ENCODE measurements at regions of chr12 and their contacts with region 1.

Region 1: GRCh38 chr12:52171950-52172512 is 19.8 kb downstream of the KRT80 start:
- DNase-seq: peak; percentile 39
- ATAC-seq: peak; percentile 70
- H3K4me3 ChIP-seq: no peak overlapping the region
- H3K27ac ChIP-seq: no peak overlapping the region
- H3K4me1 ChIP-seq: peaks cover 18% of the 10 kb centered on the region
- H3K27me3 ChIP-seq: peaks cover 0 to 2% of the 10 kb centered on the region in 2 experiments; a peak in 2 of 5 replicates
- CTCF ChIP-seq: peak; percentile 64
- EP300 ChIP-seq: no peak
- POLR2A ChIP-seq: no peak
- RAD21 ChIP-seq: peak; percentile 35; the same call in 1 of the 2 replicates

Region 2: DNA sequence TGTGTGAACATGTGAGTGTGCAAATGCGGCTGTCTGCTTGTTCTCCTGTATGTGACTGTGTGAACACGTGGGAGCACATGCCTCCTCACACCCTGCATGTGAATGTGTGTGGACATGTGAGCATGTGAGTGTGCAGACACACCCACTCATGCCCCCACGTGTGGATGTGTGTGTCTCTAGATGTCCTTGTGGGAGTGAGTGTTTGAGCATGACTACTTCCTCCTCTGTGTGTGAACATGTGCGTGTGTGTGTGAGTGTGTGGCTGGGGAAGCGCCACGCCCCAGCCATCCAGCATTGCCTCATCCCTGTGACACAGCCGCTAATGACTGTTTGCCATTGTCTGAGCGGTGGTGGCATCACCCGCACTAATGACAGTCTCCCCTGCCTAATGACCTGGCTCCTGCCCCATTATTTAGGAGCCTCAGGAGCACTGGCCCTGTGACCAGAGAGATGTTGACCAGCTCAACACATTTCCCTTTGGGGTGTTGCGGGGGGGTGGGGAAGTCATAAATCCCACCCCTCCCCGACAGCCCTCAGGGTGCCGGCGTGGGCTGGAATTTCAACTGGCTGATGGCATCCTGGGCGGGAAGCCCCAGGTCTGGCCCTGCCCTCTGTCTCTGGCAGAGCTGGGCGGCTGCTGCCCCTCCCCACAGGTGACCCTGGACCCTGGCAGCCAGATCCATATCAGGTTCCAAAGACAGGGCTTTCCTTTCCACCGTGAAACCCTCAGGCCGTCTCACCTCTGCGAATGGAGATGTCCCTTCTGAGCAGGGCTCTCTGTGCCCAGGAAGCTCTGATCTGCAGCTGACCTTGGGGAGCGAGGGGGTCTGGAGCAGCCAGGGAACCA is 31.3 kb after region 1 on chr12:
- CTCF ChIA-PET with region 1: no interaction called
- POLR2A ChIA-PET with region 1: no interaction called
- in situ Hi-C with region 1: loop called (anchors 5 kb)
- intact Hi-C with region 1: no loop called
- DNase-seq: peak; percentile 63
- ATAC-seq: peak; percentile 28; the same call in 2 of the 3 replicates
- H3K4me3 ChIP-seq: no peak overlapping the region
- H3K27ac ChIP-seq: no peak overlapping the region
- H3K4me1 ChIP-seq: peaks cover 12% of the 10 kb centered on the region; the same call in 1 of the 2 replicates
- H3K27me3 ChIP-seq: peaks cover 10 to 73% of the 10 kb centered on the region in 2 experiments
- CTCF ChIP-seq: no peak
- EP300 ChIP-seq: no peak
- POLR2A ChIP-seq: no peak
- RAD21 ChIP-seq: no peak

Region 3: GRCh38 chr12:52213512-52214420 is 41.7 kb after region 1 on chr12:
- CTCF ChIA-PET with region 1: interaction called, 15 read pairs
- POLR2A ChIA-PET with region 1: no interaction called
- in situ Hi-C with region 1: no loop called
- intact Hi-C with region 1: no loop called
- DNase-seq: peak; percentile 57
- ATAC-seq: peak; percentile 95
- H3K4me3 ChIP-seq: no peak overlapping the region
- H3K27ac ChIP-seq: no peak overlapping the region
- H3K4me1 ChIP-seq: no peaks in the 10 kb centered on the region
- H3K27me3 ChIP-seq: peaks cover 10 to 22% of the 10 kb centered on the region in 2 experiments; a peak in 3 of 5 replicates
- CTCF ChIP-seq: peak; percentile 89
- EP300 ChIP-seq: no peak
- POLR2A ChIP-seq: no peak
- RAD21 ChIP-seq: peak; percentile 91

Measured in HepG2 (cell line).